ENCODE measurements at regions of chr2 and their contacts with region 1.

Region 1: DNA sequence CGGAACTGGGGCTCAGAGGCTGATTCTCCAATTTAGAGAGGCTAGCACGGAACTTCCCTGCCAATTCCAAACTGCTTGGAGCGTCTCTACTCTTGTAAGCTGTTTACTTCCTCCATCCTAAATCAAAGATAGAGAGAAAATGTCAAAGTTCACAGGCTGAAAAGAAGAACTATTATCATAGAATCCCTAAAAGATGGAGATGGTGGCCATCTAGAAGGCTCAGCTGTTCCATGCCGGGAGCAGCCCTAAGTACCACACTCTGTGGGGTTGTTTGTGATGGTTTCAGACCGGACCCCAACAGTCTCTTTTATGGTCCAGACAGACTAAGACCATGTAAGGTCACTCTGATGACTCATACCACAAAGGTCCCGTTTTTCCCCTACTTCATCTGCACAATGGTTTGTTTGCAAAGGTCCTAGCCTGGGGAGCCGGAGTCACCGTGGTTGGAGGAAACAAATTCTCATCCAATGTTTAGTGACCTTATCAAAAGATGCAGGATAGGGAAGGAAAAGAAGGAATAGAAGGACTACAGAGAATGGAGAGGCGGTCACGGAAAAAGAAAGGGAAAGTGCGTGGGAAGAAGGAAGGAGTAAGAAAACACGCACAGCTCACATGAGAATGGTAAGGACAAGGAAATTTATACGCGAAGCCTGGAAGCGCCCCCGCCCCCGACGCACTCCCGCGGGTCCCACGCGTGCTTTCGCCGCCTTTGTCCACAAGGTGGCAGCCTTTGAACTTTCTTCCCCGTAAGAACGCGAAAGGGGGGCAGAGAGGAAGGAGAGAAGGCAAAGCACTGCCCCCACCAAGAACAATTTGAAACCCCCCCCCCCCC is 453 bp upstream of the ANTXR1 start:
- DNase-seq: peak; percentile 29 to 81
- H3K4me3 ChIP-seq: peak overlapping the region; percentile 92
- H3K4me1 ChIP-seq: peaks cover 3% of the 10 kb centered on the region; the same call in 1 of the 2 replicates
- H3K27me3 ChIP-seq: peaks cover 17% of the 10 kb centered on the region

Region 2: DNA sequence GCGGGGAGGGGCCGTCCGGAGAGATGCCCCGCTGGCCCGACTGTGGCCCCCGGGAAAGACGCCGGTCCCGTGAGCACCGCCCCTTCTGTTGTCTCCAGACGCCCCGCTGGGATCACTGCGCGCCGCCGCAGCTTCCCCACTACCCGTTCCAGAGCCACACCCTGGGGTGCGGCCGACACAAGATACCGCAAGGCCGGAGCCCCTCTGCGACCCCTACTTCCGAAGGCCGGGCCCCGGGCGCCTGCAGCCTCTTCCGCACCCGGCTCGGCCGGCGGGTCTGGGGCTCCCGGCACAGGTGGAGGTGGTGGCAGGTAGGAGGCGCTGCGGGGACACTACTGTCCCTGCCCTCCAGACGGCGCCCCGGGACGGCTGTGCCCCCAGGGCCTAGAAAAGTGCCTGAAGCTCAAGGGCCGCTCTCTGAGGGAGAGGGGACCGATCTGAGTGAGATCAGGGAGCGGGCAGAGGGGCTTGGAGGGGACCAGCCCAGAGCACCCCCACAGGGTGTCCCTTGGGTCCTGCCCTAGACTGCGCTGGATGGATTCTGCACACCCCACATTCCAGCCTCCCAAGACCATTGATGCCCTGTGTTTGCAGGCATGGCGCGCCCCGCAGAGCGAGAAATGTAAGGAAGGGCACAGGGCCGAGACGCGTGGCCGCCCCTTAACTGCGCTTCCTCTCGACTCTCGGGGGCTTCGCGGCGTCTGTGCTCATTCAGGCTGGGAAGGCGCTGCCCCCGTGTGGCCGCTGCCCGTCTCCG is 294.5 kb after region 1 on chr2:
- in situ Hi-C with region 1: loop called (anchors 5 kb)
- DNase-seq: peak; percentile 70 to 91
- H3K4me3 ChIP-seq: peak overlapping the region; percentile 50
- H3K4me1 ChIP-seq: peaks cover 10% of the 10 kb centered on the region
- H3K27me3 ChIP-seq: no peaks in the 10 kb centered on the region

Measured in HAP-1 (cell line).